Activated CD4-positive, alpha-beta memory T cell treated with anti-CD3 and anti-CD28 coated beads for 36 hours (primary cell): ENCODE measurements at regions of chr3 and their contacts with region 1.

Region 1: DNA sequence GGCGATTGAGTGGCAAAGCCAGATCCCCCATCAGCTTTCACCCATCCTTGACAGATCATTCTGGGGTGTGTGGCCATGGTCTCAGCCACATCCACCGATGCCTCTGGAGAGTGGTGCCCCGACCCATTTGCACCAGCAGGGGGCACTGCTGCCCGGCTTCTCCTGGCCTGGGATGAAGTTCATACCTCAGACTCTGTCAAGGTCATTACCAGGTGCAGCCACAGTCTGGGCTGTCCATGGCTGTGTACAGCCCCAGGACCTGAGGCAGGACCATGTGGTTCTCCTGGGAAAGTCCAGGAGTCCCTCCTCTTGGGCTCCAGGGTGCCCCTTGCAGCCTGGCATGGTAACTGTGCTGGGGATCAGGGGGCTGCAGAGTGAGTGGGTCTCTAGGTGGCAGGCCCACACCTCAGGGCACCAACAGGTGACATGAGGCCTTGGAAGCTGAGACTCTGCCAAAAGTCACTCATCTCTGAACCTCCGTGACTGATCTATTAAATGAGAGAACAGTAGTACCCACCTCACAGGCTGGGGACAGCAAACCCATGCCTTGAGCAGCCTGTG is 67.2 kb downstream of the CACNA2D2 start:
- DNase-seq: peak; percentile 85
- H3K4me3 Mint-ChIP-seq: no peak overlapping the region
- H3K27ac Mint-ChIP-seq: no peak overlapping the region
- H3K4me1 Mint-ChIP-seq: no peaks in the 10 kb centered on the region
- H3K27me3 Mint-ChIP-seq: peaks cover 3% of the 10 kb centered on the region

Region 2: DNA sequence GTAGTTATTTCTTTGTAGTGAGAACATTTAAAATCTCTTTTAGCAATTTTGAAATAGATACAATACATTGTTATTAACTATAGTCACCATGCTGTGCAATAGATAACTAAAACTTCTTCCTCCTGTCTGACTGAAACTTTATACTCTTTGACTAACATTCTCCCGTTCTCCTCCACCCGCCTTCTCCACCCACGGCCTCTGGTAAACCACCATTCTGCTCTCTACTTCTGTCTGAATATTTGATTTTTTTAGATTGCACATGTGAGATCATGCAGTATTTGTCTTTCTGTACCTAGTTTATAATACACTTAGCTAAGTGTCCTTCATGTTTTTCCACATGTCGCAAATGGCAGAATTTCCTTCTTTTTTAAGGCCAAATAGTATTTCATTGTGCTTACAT is 420.3 kb before region 1 on chr3:
- CTCF ChIA-PET with region 1: no interaction called
- POLR2A ChIA-PET with region 1: no interaction called
- intact Hi-C with region 1: no loop called
- DNase-seq: peak; percentile 15
- H3K4me3 Mint-ChIP-seq: no peak overlapping the region
- H3K27ac Mint-ChIP-seq: no peak overlapping the region
- H3K4me1 Mint-ChIP-seq: peaks cover 5% of the 10 kb centered on the region
- H3K27me3 Mint-ChIP-seq: no peaks in the 10 kb centered on the region

Region 3: DNA sequence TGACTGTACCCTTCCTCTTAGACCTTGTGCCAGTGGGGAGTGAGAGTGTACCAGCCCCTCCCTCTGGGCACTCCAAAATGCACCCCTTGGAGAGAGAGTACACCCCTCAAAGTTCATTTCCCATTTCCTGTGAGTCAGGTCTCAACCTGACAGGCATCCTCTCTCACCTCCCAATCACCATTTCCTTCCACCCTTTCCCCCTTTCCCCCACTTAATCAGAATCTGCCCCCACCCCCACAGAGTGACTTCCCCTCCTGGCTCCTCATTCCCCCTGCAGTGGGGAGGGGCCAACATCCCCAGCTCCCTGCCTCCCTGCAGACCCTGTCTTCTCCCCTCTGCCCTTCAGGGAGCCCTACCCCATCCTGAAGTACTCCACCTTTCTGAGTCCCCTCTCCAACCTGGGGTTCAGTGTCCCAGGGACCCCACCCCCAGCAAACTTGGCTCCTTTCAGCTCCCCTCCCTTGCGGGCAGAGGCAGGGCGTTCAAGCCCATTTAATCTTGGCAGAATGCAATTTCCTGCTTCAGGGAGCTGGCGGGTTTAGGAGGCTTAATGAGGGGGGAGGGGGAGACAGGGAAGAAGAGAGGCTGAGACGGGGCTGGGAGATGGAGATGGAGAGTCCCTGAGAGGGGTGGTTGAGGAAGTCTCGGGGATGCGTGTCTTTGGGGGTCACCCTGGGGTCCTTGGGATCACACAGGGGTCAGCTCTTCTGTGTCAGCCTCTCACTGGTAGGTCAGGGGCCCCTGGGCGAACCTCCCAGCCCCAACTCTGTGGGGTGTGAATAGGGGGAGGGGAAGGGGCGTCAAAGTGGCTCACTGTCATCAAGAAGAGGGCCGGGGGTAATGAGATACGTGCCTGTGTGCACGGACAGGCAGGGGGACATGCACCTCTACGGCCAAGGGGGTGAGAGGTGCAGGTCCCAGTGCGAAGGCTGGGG is 297.7 kb before region 1 on chr3:
- CTCF ChIA-PET with region 1: no interaction called
- POLR2A ChIA-PET with region 1: no interaction called
- intact Hi-C with region 1: no loop called
- DNase-seq: no peak
- H3K4me3 Mint-ChIP-seq: no peak overlapping the region
- H3K27ac Mint-ChIP-seq: no peak overlapping the region
- H3K4me1 Mint-ChIP-seq: peaks cover 11% of the 10 kb centered on the region
- H3K27me3 Mint-ChIP-seq: no peaks in the 10 kb centered on the region

Region 4: GRCh38 chr3:50450209-50450921 is 14.2 kb after region 1 on chr3:
- CTCF ChIA-PET with region 1: no interaction called
- POLR2A ChIA-PET with region 1: no interaction called
- intact Hi-C with region 1: no loop called
- DNase-seq: peak; percentile 86
- H3K4me3 Mint-ChIP-seq: peak overlapping the region; percentile 65
- H3K27ac Mint-ChIP-seq: peak overlapping the region; percentile 79
- H3K4me1 Mint-ChIP-seq: peaks cover 11% of the 10 kb centered on the region
- H3K27me3 Mint-ChIP-seq: no peaks in the 10 kb centered on the region

Region 5: DNA sequence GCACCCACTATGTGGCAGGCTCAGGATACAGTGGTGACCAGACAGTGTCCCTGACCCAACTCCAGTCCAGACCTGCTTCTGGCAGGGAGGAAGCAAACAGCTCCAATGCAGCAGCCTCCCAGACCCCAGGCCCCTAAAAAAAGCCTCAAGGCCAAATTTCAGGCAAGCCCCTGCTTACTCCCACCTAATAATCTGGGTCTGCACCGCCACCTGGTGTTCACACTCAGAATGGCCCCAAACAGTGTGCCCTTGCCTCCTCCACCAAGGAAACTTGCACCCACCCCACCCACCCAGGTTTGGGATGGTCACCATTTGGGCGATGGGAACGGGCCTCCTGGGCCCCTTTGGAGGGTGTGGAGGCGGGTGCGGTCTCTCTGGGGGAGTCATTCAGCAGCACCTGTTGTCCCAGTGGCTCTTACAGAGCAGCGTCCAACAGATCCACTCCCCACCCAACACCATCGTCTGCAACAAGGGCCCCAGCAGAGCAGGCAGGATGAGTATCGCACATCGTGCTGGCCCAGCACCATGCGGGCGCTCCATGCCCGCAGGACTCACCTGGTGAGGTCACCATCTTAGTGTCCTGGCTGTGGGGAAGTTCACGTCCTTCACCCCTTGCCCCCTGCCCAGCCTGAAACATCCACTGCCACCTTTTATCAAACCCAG is 114.0 kb after region 1 on chr3:
- CTCF ChIA-PET with region 1: interaction called, 3 read pairs
- POLR2A ChIA-PET with region 1: no interaction called
- intact Hi-C with region 1: loop called (anchors 1 kb)
- DNase-seq: peak; percentile 79
- H3K4me3 Mint-ChIP-seq: no peak overlapping the region
- H3K27ac Mint-ChIP-seq: no peak overlapping the region
- H3K4me1 Mint-ChIP-seq: no peaks in the 10 kb centered on the region
- H3K27me3 Mint-ChIP-seq: no peaks in the 10 kb centered on the region

Region 6: GRCh38 chr3:50652709-50653108 is 216.5 kb after region 1 on chr3:
- CTCF ChIA-PET with region 1: no interaction called
- POLR2A ChIA-PET with region 1: no interaction called
- intact Hi-C with region 1: loop called (anchors 10 kb)
- DNase-seq: peak; percentile 77
- H3K4me3 Mint-ChIP-seq: no peak overlapping the region
- H3K27ac Mint-ChIP-seq: peak overlapping the region; percentile 19
- H3K4me1 Mint-ChIP-seq: peaks cover 28% of the 10 kb centered on the region
- H3K27me3 Mint-ChIP-seq: no peaks in the 10 kb centered on the region